Kidney (tissue), 22 donors: ENCODE measurements at regions of chr18 and their contacts with region 1.

Region 1: GRCh38 chr18:1229634-1230033 is 325.0 kb downstream of the ADCYAP1 start:
- DNase-seq: no peak
- H3K4me3 ChIP-seq: no peak overlapping the region
- H3K27ac ChIP-seq: no peak overlapping the region
- H3K4me1 ChIP-seq: no peaks in the 10 kb centered on the region
- H3K27me3 ChIP-seq: no peaks in the 10 kb centered on the region
- CTCF ChIP-seq: no peak

Region 2: GRCh38 chr18:1045658-1046057 is 184.0 kb before region 1 on chr18:
- intact Hi-C with region 1: no loop called
- DNase-seq: peak in 1 of 5 donors; percentile 24
- H3K4me3 ChIP-seq: no peak overlapping the region
- H3K27ac ChIP-seq: no peak overlapping the region
- H3K4me1 ChIP-seq: no peaks in the 10 kb centered on the region
- H3K27me3 ChIP-seq: no peaks in the 10 kb centered on the region
- CTCF ChIP-seq: no peak

Region 3: GRCh38 chr18:1173593-1173992 is 56.0 kb before region 1 on chr18:
- intact Hi-C with region 1: loop called (anchors 10 kb)
- DNase-seq: no peak
- H3K4me3 ChIP-seq: no peak overlapping the region
- H3K27ac ChIP-seq: no peak overlapping the region
- H3K4me1 ChIP-seq: no peaks in the 10 kb centered on the region
- H3K27me3 ChIP-seq: no peaks in the 10 kb centered on the region
- CTCF ChIP-seq: no peak